ENCODE measurements at regions of chr3 and their contacts with region 1.

Region 1: GRCh38 chr3:107522510-107523288 is at the start of gene BBX:
- DNase-seq: peak; percentile 94
- H3K4me3 Mint-ChIP-seq: peak within 1 kb of the TSS; percentile 92
- H3K27ac Mint-ChIP-seq: peak within 1 kb of the TSS; percentile 94
- H3K4me1 Mint-ChIP-seq: peaks cover 23% of the 10 kb centered on the region
- H3K27me3 Mint-ChIP-seq: no peaks in the 10 kb centered on the region
- total RNA-seq, gene BBX: 43.1 to 48.6 TPM

Region 2: DNA sequence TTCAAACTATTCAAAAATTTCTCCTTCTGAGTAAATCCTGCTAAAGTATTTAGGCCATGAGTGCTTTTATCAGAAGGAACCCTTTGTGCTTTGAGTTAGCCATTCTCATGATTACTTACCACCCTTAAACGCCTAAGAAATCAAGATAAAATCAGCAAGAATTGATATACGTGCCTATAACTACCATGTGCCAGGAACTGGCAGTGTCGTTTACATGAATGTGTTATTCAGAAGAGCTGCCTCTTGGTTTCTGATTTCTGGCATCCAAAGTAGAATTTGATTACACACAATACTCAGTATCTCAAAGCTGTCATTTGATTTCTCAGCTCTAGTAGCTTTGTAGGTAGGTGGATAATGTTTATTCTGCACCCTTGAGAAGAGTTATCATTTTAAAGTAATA is 496.7 kb before region 1 on chr3:
- CTCF ChIA-PET with region 1: no interaction called
- intact Hi-C with region 1: no loop called
- DNase-seq: no peak
- H3K4me3 Mint-ChIP-seq: no peak overlapping the region
- H3K27ac Mint-ChIP-seq: no peak overlapping the region
- H3K4me1 Mint-ChIP-seq: no peaks in the 10 kb centered on the region
- H3K27me3 Mint-ChIP-seq: no peaks in the 10 kb centered on the region

Region 3: GRCh38 chr3:107450254-107450893 is 72.3 kb before region 1 on chr3:
- CTCF ChIA-PET with region 1: no interaction called
- intact Hi-C with region 1: loop called (anchors 5 kb)
- DNase-seq: peak; percentile 42
- H3K4me3 Mint-ChIP-seq: no peak overlapping the region
- H3K27ac Mint-ChIP-seq: no peak overlapping the region
- H3K4me1 Mint-ChIP-seq: peaks cover 9% of the 10 kb centered on the region
- H3K27me3 Mint-ChIP-seq: no peaks in the 10 kb centered on the region

Region 4: GRCh38 chr3:107598926-107599771 is 76.5 kb after region 1 on chr3:
- CTCF ChIA-PET with region 1: interaction called, 3 read pairs
- intact Hi-C with region 1: loop called (anchors 1 kb)
- DNase-seq: peak; percentile 61
- H3K4me3 Mint-ChIP-seq: peak overlapping the region; percentile 79
- H3K27ac Mint-ChIP-seq: peak overlapping the region; percentile 85
- H3K4me1 Mint-ChIP-seq: peaks cover 50% of the 10 kb centered on the region
- H3K27me3 Mint-ChIP-seq: no peaks in the 10 kb centered on the region

Region 5: DNA sequence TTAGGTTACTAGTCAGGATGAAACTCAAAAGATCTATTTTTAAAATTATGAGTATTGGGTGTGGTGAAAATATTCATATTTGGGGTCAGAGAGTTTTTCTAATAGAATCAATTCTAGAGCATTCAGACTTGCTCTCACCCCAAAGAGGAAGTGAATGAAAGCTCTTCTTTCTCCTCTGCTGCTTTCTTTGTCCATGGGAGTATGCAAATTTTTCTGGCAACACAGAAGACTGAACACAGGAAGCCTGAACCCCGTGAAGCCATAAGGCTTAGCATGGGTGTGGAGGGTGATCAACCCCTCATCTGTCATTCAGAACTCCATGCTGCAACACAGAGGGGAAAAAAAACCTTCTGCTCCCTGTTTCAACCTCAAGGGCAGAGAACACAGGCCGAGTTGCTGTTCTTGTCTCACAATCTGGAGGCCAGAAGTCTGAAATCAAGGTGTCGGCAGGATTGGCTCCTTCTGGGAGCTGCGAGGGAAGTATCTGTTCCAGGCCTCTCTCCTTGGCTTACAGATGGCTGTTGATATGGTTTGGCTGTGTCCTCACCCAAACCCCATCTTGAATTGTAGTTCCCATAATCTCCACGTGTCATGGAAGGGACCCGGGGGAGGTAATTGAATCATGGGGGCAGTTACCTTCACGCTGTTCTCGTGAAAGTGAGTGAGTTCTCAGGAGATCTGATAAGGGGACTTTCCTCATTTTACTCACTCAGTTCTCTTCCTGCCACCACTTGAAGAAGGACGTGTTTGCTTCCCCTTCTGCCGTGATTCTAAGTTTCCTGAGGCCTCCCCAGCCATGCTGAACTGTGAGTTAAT is 601.8 kb after region 1 on chr3:
- CTCF ChIA-PET with region 1: no interaction called
- intact Hi-C with region 1: loop called (anchors 2 kb)
- DNase-seq: peak; percentile 84
- H3K4me3 Mint-ChIP-seq: peak overlapping the region; percentile 90
- H3K27ac Mint-ChIP-seq: peak overlapping the region; percentile 100
- H3K4me1 Mint-ChIP-seq: peaks cover 56% of the 10 kb centered on the region
- H3K27me3 Mint-ChIP-seq: no peaks in the 10 kb centered on the region

Measured in activated naive CD4-positive, alpha-beta T cell treated with anti-CD3 and anti-CD28 coated beads for 36 hours (primary cell).